CD8-positive, alpha-beta T cell (primary cell): ENCODE measurements at regions of chr16 and their contacts with region 1.

Region 1: DNA sequence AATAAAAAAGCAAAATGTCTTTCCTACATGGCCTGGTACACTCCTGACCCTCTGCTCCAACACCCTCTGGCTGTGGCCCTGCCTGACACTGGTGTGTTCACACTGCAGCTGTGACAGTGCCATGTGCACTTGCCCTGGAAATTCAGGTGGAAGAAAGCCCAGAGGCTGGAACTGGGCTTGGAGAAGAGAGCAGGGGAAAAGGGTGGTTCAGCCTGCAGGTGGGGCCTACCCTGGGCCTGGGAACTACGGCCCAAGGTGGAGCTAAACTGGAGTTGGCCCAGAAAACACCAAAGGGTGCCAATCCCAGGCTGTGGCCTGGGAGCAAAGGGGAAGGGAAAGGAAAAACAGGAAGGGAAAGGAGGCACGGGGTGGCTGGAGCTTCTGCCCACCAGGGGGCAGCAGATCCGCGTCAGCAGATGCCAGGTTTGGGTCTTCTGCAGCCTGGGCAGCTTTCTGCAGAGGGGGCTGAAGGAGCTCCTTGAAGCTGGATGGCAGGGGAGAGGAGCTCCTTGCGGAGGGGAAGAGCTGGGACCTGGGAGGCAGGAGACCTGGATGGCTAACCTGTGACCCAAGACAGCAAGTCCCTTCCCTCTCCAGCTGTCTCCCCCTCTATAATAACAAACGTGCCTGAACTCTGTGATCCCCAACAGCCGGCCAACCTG is 15.4 kb upstream of the CTCF start:
- DNase-seq: peak; percentile 42 to 87 (median 77)
- ATAC-seq: peak; percentile 24
- H3K4me3 ChIP-seq: peak overlapping the region in 1 of 2 experiments; percentile 51
- H3K4me3 Mint-ChIP-seq: peak overlapping the region; percentile 75
- H3K27ac ChIP-seq: peak overlapping the region; percentile 36 to 57
- H3K27ac Mint-ChIP-seq: peak overlapping the region; percentile 94
- H3K4me1 ChIP-seq: peaks cover 42% of the 10 kb centered on the region
- H3K4me1 Mint-ChIP-seq: peaks cover 53% of the 10 kb centered on the region
- H3K27me3 ChIP-seq: no peaks in the 10 kb centered on the region
- H3K27me3 Mint-ChIP-seq: no peaks in the 10 kb centered on the region
- CTCF ChIP-seq: peak; percentile 99

Region 2: DNA sequence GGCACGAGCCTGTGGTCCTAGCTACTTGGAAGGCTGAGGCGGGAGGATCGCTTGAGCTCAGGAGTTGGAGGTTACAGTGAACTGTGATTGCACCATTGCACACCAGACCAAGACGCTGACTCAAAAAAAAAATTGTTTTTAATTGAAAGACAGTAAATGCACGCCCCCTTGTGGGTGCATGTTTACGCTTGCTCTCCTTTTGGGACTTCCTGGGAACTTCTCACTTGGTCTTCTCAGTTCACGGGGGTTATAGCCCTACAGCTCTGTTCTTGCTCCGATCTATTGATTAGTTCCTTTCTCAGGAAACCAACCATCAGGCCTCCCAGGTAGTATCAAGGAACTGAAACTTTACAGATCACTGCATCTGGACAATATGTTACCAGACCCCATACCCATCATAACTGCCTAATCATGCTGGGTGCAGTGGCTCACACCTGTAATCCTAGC is 32.5 kb before region 1 on chr16:
- CTCF ChIA-PET with region 1: interaction called, 11 read pairs
- POLR2A ChIA-PET with region 1: no interaction called
- intact Hi-C with region 1: no loop called
- DNase-seq: peak; percentile 65 to 91 (median 85)
- ATAC-seq: peak; percentile 93
- H3K4me3 ChIP-seq: no peak overlapping the region
- H3K4me3 Mint-ChIP-seq: no peak overlapping the region
- H3K27ac ChIP-seq: no peak overlapping the region
- H3K27ac Mint-ChIP-seq: no peak overlapping the region
- H3K4me1 ChIP-seq: peaks cover 19% of the 10 kb centered on the region
- H3K4me1 Mint-ChIP-seq: peaks cover 28% of the 10 kb centered on the region
- H3K27me3 ChIP-seq: no peaks in the 10 kb centered on the region
- H3K27me3 Mint-ChIP-seq: no peaks in the 10 kb centered on the region
- CTCF ChIP-seq: peak; percentile 77

Region 3: DNA sequence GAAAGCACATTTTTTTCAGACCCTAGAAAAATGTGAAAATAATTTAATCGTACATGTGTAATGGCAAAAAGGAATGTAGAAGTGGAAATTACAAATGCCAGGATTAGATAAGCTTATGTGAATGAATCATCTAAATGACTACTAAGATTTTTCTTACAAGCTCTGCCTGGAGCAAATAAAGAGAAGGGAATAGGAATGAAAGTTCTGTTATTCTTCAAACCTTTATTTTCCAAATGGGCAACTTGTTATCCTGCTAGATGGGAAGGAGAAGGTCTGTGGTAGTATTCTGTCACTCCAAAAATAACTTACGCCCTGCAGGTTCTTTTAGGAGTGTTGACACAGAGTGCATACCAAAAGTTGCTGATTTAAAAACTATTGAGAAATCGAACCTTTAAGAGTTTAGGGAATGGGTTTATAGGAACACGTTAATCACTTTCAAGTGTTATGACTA is 25.1 kb after region 1 on chr16:
- CTCF ChIA-PET with region 1: interaction called, 271 read pairs
- POLR2A ChIA-PET with region 1: no interaction called
- intact Hi-C with region 1: no loop called
- DNase-seq: no peak
- ATAC-seq: no peak
- H3K4me3 ChIP-seq: no peak overlapping the region
- H3K4me3 Mint-ChIP-seq: no peak overlapping the region
- H3K27ac ChIP-seq: no peak overlapping the region
- H3K27ac Mint-ChIP-seq: no peak overlapping the region
- H3K4me1 ChIP-seq: peaks cover 6% of the 10 kb centered on the region
- H3K4me1 Mint-ChIP-seq: peaks cover 37% of the 10 kb centered on the region
- H3K27me3 ChIP-seq: no peaks in the 10 kb centered on the region
- H3K27me3 Mint-ChIP-seq: no peaks in the 10 kb centered on the region
- CTCF ChIP-seq: no peak

Region 4: GRCh38 chr16:67613808-67614207 is 66.9 kb after region 1 on chr16:
- CTCF ChIA-PET with region 1: interaction called, 10 read pairs
- POLR2A ChIA-PET with region 1: interaction called, 3 read pairs
- intact Hi-C with region 1: no loop called
- DNase-seq: peak in 1 of 9 experiments; percentile 14
- ATAC-seq: no peak
- H3K4me3 ChIP-seq: no peak overlapping the region
- H3K4me3 Mint-ChIP-seq: no peak overlapping the region
- H3K27ac ChIP-seq: no peak overlapping the region
- H3K27ac Mint-ChIP-seq: no peak overlapping the region
- H3K4me1 ChIP-seq: no peaks in the 10 kb centered on the region
- H3K4me1 Mint-ChIP-seq: peaks cover 5% of the 10 kb centered on the region
- H3K27me3 ChIP-seq: no peaks in the 10 kb centered on the region
- H3K27me3 Mint-ChIP-seq: no peaks in the 10 kb centered on the region
- CTCF ChIP-seq: no peak

Region 5: GRCh38 chr16:67641779-67642708 is 95.2 kb after region 1 on chr16:
- CTCF ChIA-PET with region 1: interaction called, 241 read pairs
- POLR2A ChIA-PET with region 1: interaction called, 52 read pairs
- intact Hi-C with region 1: loop called (anchors 1 kb)
- DNase-seq: no peak
- ATAC-seq: no peak
- H3K4me3 ChIP-seq: no peak overlapping the region
- H3K4me3 Mint-ChIP-seq: no peak overlapping the region
- H3K27ac ChIP-seq: no peak overlapping the region
- H3K27ac Mint-ChIP-seq: no peak overlapping the region
- H3K4me1 ChIP-seq: peaks cover 26% of the 10 kb centered on the region
- H3K4me1 Mint-ChIP-seq: peaks cover 9% of the 10 kb centered on the region
- H3K27me3 ChIP-seq: no peaks in the 10 kb centered on the region
- H3K27me3 Mint-ChIP-seq: no peaks in the 10 kb centered on the region
- CTCF ChIP-seq: no peak

Region 6: GRCh38 chr16:67667817-67668494 is 121.1 kb after region 1 on chr16:
- CTCF ChIA-PET with region 1: interaction called, 49 read pairs
- POLR2A ChIA-PET with region 1: interaction called, 5 read pairs
- intact Hi-C with region 1: loop called (anchors 1 kb)
- DNase-seq: peak; percentile 64 to 91 (median 78)
- ATAC-seq: peak; percentile 90
- H3K4me3 ChIP-seq: peak overlapping the region in 1 of 2 experiments; percentile 84
- H3K4me3 Mint-ChIP-seq: peak overlapping the region; percentile 82
- H3K27ac ChIP-seq: peak overlapping the region in 1 of 2 experiments; percentile 38
- H3K27ac Mint-ChIP-seq: no peak overlapping the region
- H3K4me1 ChIP-seq: peaks cover 17% of the 10 kb centered on the region
- H3K4me1 Mint-ChIP-seq: peaks cover 16% of the 10 kb centered on the region
- H3K27me3 ChIP-seq: no peaks in the 10 kb centered on the region
- H3K27me3 Mint-ChIP-seq: no peaks in the 10 kb centered on the region
- CTCF ChIP-seq: peak; percentile 65